CD8-positive, alpha-beta T cell (primary cell): ENCODE measurements at regions of chr15 and their contacts with region 1.

Region 1: GRCh38 chr15:56040081-56041035 is 46.9 kb upstream of the NEDD4 start:
- DNase-seq: peak in 2 of 9 experiments; percentile 24 to 31
- ATAC-seq: no peak
- H3K4me3 ChIP-seq: no peak overlapping the region
- H3K4me3 Mint-ChIP-seq: no peak overlapping the region
- H3K27ac ChIP-seq: no peak overlapping the region
- H3K27ac Mint-ChIP-seq: no peak overlapping the region
- H3K4me1 ChIP-seq: peaks cover 38% of the 10 kb centered on the region
- H3K4me1 Mint-ChIP-seq: peaks cover 45% of the 10 kb centered on the region
- H3K27me3 ChIP-seq: no peaks in the 10 kb centered on the region
- H3K27me3 Mint-ChIP-seq: no peaks in the 10 kb centered on the region
- CTCF ChIP-seq: no peak

Region 2: GRCh38 chr15:55494931-55495330 is 545.4 kb before region 1 on chr15:
- CTCF ChIA-PET with region 1: no interaction called
- POLR2A ChIA-PET with region 1: no interaction called
- intact Hi-C with region 1: loop called in 1 of 2 experiments (anchors 10 kb)
- DNase-seq: peak in 1 of 9 experiments; percentile 27
- ATAC-seq: peak; percentile 16
- H3K4me3 ChIP-seq: no peak overlapping the region
- H3K4me3 Mint-ChIP-seq: no peak overlapping the region
- H3K27ac ChIP-seq: no peak overlapping the region
- H3K27ac Mint-ChIP-seq: no peak overlapping the region
- H3K4me1 ChIP-seq: peaks cover 9% of the 10 kb centered on the region
- H3K4me1 Mint-ChIP-seq: peaks cover 9% of the 10 kb centered on the region
- H3K27me3 ChIP-seq: no peaks in the 10 kb centered on the region
- H3K27me3 Mint-ChIP-seq: no peaks in the 10 kb centered on the region
- CTCF ChIP-seq: no peak

Region 3: GRCh38 chr15:55993111-55993803 is 47.1 kb before region 1 on chr15 and contains the start of gene NEDD4:
- CTCF ChIA-PET with region 1: interaction called, 7 read pairs
- POLR2A ChIA-PET with region 1: no interaction called
- intact Hi-C with region 1: loop called in 1 of 2 experiments (anchors 2 kb)
- DNase-seq: peak; percentile 28 to 87 (median 69)
- ATAC-seq: peak; percentile 81
- H3K4me3 ChIP-seq: peak within 1 kb of the TSS; percentile 77 to 90
- H3K4me3 Mint-ChIP-seq: peak within 1 kb of the TSS; percentile 92
- H3K27ac ChIP-seq: no peak within 1 kb of the TSS
- H3K27ac Mint-ChIP-seq: peak within 1 kb of the TSS; percentile 25
- H3K4me1 ChIP-seq: peaks cover 5% of the 10 kb centered on the region
- H3K4me1 Mint-ChIP-seq: peaks cover 13% of the 10 kb centered on the region
- H3K27me3 ChIP-seq: no peaks in the 10 kb centered on the region
- H3K27me3 Mint-ChIP-seq: no peaks in the 10 kb centered on the region
- CTCF ChIP-seq: no peak
- total RNA-seq, gene NEDD4: 0.89 to 1.4 TPM

Region 4: DNA sequence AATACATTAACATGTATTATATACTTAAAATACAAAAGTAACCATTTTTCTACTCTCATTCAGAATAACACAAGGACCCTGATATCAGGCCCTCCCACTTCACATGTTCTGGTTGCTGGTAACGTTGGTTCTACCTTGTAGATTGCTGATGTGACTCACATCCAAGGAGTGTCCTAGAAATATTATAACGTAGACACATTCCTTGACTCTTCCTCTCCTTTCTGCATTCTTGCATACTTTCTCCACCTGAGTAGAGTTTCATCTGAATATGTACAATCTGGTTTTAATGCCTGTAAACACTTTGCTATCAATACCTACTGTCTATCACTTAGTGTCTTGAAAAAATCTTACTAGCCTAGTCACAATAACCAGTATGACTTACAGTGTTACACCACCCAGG is 11.9 kb before region 1 on chr15:
- CTCF ChIA-PET with region 1: no interaction called
- POLR2A ChIA-PET with region 1: interaction called, 4 read pairs
- intact Hi-C with region 1: loop called in 1 of 2 experiments (anchors 2 kb)
- DNase-seq: no peak
- ATAC-seq: no peak
- H3K4me3 ChIP-seq: no peak overlapping the region
- H3K4me3 Mint-ChIP-seq: no peak overlapping the region
- H3K27ac ChIP-seq: no peak overlapping the region
- H3K27ac Mint-ChIP-seq: no peak overlapping the region
- H3K4me1 ChIP-seq: no peaks in the 10 kb centered on the region
- H3K4me1 Mint-ChIP-seq: no peaks in the 10 kb centered on the region
- H3K27me3 ChIP-seq: no peaks in the 10 kb centered on the region
- H3K27me3 Mint-ChIP-seq: peaks cover 5% of the 10 kb centered on the region
- CTCF ChIP-seq: no peak

Region 5: DNA sequence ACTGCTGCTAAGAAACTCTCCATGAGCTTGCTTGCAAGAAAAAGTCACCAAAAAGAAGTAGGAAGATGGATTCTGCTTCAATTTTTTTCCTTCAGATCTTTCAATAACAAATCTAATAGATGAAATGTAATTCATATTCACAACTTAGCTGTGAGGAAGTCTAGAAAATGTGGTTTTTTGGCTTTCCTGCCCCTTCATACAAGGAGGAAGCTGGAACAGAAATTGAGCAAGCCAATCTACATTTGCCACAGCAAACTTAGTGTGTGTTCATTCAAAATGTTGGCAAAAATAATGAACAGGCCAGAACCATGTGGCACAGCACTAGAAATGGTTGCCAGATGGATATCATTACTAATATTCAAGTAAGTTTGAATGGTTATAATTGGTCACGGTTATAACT is 46.2 kb after region 1 on chr15:
- CTCF ChIA-PET with region 1: no interaction called
- POLR2A ChIA-PET with region 1: no interaction called
- intact Hi-C with region 1: no loop called
- DNase-seq: no peak
- ATAC-seq: no peak
- H3K4me3 ChIP-seq: no peak overlapping the region
- H3K4me3 Mint-ChIP-seq: no peak overlapping the region
- H3K27ac ChIP-seq: no peak overlapping the region
- H3K27ac Mint-ChIP-seq: no peak overlapping the region
- H3K4me1 ChIP-seq: no peaks in the 10 kb centered on the region
- H3K4me1 Mint-ChIP-seq: peaks cover 13% of the 10 kb centered on the region
- H3K27me3 ChIP-seq: no peaks in the 10 kb centered on the region
- H3K27me3 Mint-ChIP-seq: no peaks in the 10 kb centered on the region
- CTCF ChIP-seq: no peak

Region 6: DNA sequence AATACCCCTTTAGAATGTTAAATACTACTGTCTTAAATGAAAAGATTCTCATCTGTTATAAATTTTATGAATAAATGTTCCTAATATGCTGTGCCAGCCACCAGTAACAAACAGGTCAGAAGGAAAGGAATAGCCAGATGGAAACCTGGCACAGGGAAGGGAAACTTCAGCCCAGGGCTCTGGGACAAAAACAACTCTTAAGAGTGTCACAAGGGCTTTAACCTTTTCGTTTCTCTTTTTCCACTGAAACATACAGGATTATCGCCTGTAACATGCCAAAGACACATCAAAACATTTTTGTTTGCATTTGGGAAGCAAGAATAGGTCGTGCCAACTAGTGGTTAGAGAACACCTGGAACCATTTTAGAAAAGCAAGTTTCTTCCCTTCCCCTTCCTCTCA is 62.1 kb after region 1 on chr15:
- CTCF ChIA-PET with region 1: no interaction called
- POLR2A ChIA-PET with region 1: no interaction called
- intact Hi-C with region 1: no loop called
- DNase-seq: no peak
- ATAC-seq: no peak
- H3K4me3 ChIP-seq: no peak overlapping the region
- H3K4me3 Mint-ChIP-seq: no peak overlapping the region
- H3K27ac ChIP-seq: no peak overlapping the region
- H3K27ac Mint-ChIP-seq: no peak overlapping the region
- H3K4me1 ChIP-seq: no peaks in the 10 kb centered on the region
- H3K4me1 Mint-ChIP-seq: no peaks in the 10 kb centered on the region
- H3K27me3 ChIP-seq: no peaks in the 10 kb centered on the region
- H3K27me3 Mint-ChIP-seq: no peaks in the 10 kb centered on the region
- CTCF ChIP-seq: no peak

Region 7: GRCh38 chr15:56732921-56733797 is 692.8 kb after region 1 on chr15 and contains the start of gene ZNF280D:
- CTCF ChIA-PET with region 1: no interaction called
- POLR2A ChIA-PET with region 1: interaction called, 4 read pairs
- intact Hi-C with region 1: loop called in 1 of 2 experiments (anchors 10 kb)
- DNase-seq: peak; percentile 56 to 88 (median 77)
- ATAC-seq: peak; percentile 84
- H3K4me3 ChIP-seq: peak within 1 kb of the TSS; percentile 73 to 76
- H3K4me3 Mint-ChIP-seq: peak within 1 kb of the TSS; percentile 89
- H3K27ac ChIP-seq: peak within 1 kb of the TSS; percentile 68 to 72
- H3K27ac Mint-ChIP-seq: peak within 1 kb of the TSS; percentile 95
- H3K4me1 ChIP-seq: peaks cover 23% of the 10 kb centered on the region
- H3K4me1 Mint-ChIP-seq: peaks cover 43% of the 10 kb centered on the region
- H3K27me3 ChIP-seq: no peaks in the 10 kb centered on the region
- H3K27me3 Mint-ChIP-seq: no peaks in the 10 kb centered on the region
- CTCF ChIP-seq: no peak
- total RNA-seq, gene ZNF280D: 19.6 to 27.4 TPM